Colonic mucosa (tissue), 4 donors: ENCODE measurements at regions of chr2 and their contacts with region 1.

Region 1: DNA sequence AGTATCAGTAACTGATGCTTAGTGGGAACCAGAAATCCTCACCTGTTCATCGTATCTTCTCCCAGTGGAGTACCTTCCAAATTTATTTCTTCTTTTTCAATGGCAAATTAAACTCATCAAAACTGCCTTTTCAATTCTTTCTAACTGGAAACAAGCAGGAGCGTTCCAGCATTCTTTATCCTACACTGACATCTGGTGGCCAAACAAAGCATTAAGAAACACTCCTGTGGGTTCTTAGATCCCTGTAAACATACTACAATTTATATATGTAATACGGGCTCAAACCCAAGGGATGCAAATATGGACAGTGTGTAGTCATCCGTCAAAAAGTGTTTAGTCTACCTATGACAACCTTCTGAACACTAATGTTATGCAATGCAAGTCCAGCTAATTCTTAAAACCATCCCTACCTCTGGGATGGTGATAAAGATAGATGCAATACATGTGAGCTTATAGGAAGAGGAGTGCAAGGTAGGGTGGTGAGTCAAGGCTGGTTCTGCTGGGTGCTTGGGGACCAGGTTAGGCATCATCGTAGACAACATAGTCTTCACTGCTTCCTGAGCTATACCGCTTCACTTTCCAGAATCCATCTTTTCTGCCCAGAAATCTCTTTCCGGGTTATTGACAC is 375.0 kb downstream of the CTNNA2 start:
- DNase-seq: peak; percentile 34
- H3K4me3 ChIP-seq: no peak overlapping the region
- H3K27ac ChIP-seq: no peak overlapping the region
- H3K4me1 ChIP-seq: no peaks in the 10 kb centered on the region
- H3K27me3 ChIP-seq: no peaks in the 10 kb centered on the region
- CTCF ChIP-seq: peak; percentile 58

Region 2: DNA sequence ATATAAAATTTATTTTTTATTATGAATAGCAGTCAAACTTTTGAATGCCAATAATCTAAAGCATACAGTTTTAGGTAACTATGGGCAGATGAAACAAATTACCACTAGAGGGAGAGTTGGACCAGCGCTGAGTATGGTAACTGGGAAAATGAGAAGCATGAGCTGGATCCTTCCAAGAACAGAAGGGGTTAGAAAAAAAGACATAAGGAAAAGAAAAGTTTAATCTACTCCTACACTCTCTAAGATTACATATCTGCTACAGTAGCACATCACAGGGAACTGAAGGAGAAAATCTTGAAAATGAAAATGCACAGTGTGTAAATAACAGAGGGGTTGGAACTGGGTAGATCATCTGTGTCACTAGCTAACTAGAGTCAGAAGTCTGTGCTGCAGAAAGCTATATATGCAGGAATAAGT is 846.8 kb before region 1 on chr2:
- intact Hi-C with region 1: loop called (anchors 10 kb)
- DNase-seq: no peak
- H3K4me3 ChIP-seq: no peak overlapping the region
- H3K27ac ChIP-seq: no peak overlapping the region
- H3K4me1 ChIP-seq: no peaks in the 10 kb centered on the region
- H3K27me3 ChIP-seq: no peaks in the 10 kb centered on the region
- CTCF ChIP-seq: peak; percentile 31